AG04450 (cell line): ENCODE measurements at regions of chr19 and their contacts with region 1.

Region 1: GRCh38 chr19:801861-802497 is 4.7 kb downstream of the PTBP1 start:
- DNase-seq: no peak
- H3K4me3 ChIP-seq: peak overlapping the region; percentile 32
- H3K27ac ChIP-seq: peak overlapping the region; percentile 31
- H3K27me3 ChIP-seq: no peaks in the 10 kb centered on the region
- CTCF ChIP-seq: no peak

Region 2: DNA sequence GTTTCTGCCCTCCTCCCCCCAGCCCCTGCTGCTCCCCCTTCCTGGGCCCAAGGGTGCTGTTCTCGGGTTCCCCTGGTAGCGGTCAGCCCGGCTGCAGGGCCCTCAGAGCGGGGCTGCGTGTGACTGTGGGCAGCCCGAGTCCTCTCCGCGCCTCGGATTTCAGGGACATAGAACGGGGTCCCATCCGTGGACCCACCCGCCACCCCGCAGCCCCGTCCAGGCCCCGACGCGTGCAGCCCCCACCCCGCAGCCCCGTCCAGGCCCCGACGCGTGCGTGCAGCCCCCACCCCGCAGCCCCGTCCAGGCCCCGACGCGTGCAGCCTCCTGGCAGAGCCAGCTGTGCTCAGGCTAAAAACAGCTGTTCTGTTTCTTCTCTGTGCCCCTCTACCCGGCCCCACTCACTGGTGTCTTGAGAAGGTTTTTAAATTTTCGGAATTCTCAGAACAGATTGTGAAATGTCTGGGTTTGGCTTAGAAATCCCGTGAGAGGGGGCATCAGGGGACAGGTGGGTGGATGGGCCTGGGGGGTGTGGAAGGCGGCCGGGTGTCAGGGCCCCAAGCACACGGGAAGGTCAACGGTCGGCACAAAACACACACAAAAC is 33.3 kb after region 1 on chr19:
- CTCF ChIA-PET with region 1: no interaction called
- POLR2A ChIA-PET with region 1: interaction called, 10 read pairs
- DNase-seq: no peak
- H3K4me3 ChIP-seq: no peak overlapping the region
- H3K27ac ChIP-seq: no peak overlapping the region
- H3K27me3 ChIP-seq: peaks cover 13% of the 10 kb centered on the region
- CTCF ChIP-seq: no peak

Region 3: DNA sequence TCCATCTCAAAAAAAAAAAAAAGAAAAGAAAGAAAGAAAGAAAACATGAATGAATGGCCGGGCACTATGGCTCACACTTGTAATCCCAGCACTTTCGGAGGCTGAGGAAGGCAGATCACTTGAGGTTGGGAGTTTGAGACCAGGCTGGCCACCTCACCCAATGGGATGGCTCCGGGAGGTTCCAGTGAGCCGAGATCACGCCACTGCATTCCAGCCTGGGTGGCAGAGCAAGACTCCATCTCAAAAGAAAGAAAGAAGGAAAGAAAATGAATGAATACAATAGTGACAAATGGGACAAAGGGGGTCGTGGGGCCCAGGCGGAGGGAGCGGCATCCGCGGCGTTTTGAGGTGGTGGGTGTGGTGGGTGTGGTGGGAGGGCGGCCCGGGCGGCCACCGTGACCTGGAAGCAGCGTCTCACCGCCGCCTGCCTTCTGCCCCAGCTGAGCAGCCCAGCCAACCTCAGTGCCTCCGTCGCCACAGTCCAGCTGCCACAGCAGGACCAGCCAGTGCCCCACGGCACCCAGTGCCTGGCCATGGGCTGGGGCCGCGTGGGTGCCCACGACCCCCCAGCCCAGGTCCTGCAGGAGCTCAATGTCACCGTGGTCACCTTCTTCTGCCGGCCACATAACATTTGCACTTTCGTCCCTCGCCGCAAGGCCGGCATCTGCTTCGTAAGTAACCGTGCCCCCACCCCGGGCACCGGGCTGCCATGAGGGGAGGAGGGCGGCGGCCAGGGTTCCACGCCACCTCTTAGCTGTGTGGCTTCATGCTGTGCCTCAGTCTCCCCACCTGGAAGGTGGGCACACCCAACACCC is 43.9 kb after region 1 on chr19:
- CTCF ChIA-PET with region 1: no interaction called
- POLR2A ChIA-PET with region 1: interaction called, 13 read pairs
- DNase-seq: no peak
- H3K4me3 ChIP-seq: no peak overlapping the region
- H3K27ac ChIP-seq: no peak overlapping the region
- H3K27me3 ChIP-seq: peaks cover 26% of the 10 kb centered on the region
- CTCF ChIP-seq: no peak

Region 4: GRCh38 chr19:1718420-1719291 is 916.7 kb after region 1 on chr19:
- CTCF ChIA-PET with region 1: no interaction called
- POLR2A ChIA-PET with region 1: no interaction called
- DNase-seq: no peak
- H3K4me3 ChIP-seq: no peak overlapping the region
- H3K27ac ChIP-seq: no peak overlapping the region
- H3K27me3 ChIP-seq: peaks cover 26% of the 10 kb centered on the region
- CTCF ChIP-seq: no peak